OCI-LY7 (cell line): ENCODE measurements at regions of chr16 and their contacts with region 1.

Region 1: GRCh38 chr16:3059000-3059722 is 6.3 kb upstream of the IL32 start:
- DNase-seq: peak; percentile 92
- H3K4me3 ChIP-seq: peak overlapping the region; percentile 76
- H3K27ac ChIP-seq: peak overlapping the region; percentile 39
- H3K4me1 ChIP-seq: peaks cover 31% of the 10 kb centered on the region
- CTCF ChIP-seq: peak; percentile 79

Region 2: GRCh38 chr16:3027945-3028712 is 31.0 kb before region 1 on chr16:
- CTCF ChIA-PET with region 1: interaction called, 12 read pairs
- POLR2A ChIA-PET with region 1: interaction called, 4 read pairs
- intact Hi-C with region 1: no loop called
- DNase-seq: peak; percentile 90
- H3K4me3 ChIP-seq: no peak overlapping the region
- H3K27ac ChIP-seq: no peak overlapping the region
- H3K4me1 ChIP-seq: peaks cover 14% of the 10 kb centered on the region
- CTCF ChIP-seq: peak; percentile 76

Region 3: DNA sequence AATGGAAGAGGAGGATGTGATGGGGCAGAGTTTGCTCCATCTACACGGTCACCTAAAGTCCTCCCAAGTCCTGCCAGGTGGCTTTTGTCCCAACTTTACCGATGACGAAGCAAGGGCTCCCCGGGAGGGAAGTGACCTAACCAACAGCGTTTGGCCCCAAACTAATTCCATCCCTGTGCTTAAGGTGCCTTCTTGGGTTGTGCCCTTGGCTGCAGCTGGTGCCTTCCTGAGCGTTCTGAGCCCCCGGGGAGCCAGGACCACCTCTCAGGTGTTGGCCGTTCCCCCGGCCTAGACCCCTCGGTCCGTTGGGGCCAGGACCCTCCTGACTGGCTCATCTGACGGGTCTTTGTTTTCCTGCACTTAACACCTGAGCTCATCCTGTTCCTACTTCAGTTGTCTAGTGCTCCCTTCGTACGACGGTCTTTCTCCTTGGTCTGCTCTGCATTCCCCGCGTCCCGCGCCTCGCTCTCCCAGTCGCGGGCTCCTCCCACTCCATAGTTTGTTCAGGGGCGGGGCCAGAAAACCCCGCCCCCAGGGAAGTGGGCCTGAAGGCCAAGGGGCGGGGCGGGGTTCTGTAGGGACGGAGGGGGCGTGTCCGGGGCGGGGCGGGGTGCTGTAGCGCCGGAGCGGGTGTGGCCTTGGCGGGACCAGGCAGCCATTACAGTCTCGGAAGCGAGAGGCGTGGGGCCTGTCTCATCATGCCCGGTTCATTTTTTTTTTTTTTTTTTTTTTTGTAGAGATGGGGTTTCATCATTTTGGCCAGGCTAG is 40.8 kb after region 1 on chr16:
- CTCF ChIA-PET with region 1: no interaction called
- POLR2A ChIA-PET with region 1: interaction called, 4 read pairs
- intact Hi-C with region 1: loop called (anchors 1 kb)
- DNase-seq: peak; percentile 94
- H3K4me3 ChIP-seq: peak overlapping the region; percentile 56
- H3K27ac ChIP-seq: no peak overlapping the region
- H3K4me1 ChIP-seq: peaks cover 47% of the 10 kb centered on the region
- CTCF ChIP-seq: no peak

Region 4: GRCh38 chr16:3129137-3130131 is 70.3 kb after region 1 on chr16:
- CTCF ChIA-PET with region 1: interaction called, 11 read pairs
- POLR2A ChIA-PET with region 1: no interaction called
- intact Hi-C with region 1: loop called (anchors 1 kb)
- DNase-seq: peak; percentile 91
- H3K4me3 ChIP-seq: peak overlapping the region; percentile 65
- H3K27ac ChIP-seq: peak overlapping the region; percentile 57
- H3K4me1 ChIP-seq: peaks cover 20% of the 10 kb centered on the region
- CTCF ChIP-seq: peak; percentile 97